ENCODE measurements at regions of chr7 and their contacts with region 1.

Region 1: GRCh38 chr7:120987683-120988590 is 574 bp upstream of the CPED1 start:
- DNase-seq: peak; percentile 91
- H3K4me3 ChIP-seq: peak overlapping the region; percentile 43
- CTCF ChIP-seq: peak; percentile 98

Region 2: GRCh38 chr7:120583899-120584586 is 403.9 kb before region 1 on chr7:
- in situ Hi-C with region 1: no loop called
- DNase-seq: peak; percentile 77
- H3K4me3 ChIP-seq: no peak overlapping the region
- CTCF ChIP-seq: no peak

Region 3: GRCh38 chr7:120894254-120894653 is 93.7 kb before region 1 on chr7:
- in situ Hi-C with region 1: no loop called
- DNase-seq: no peak
- H3K4me3 ChIP-seq: no peak overlapping the region
- CTCF ChIP-seq: no peak

Region 4: GRCh38 chr7:120933475-120933874 is 54.5 kb before region 1 on chr7:
- in situ Hi-C with region 1: no loop called
- DNase-seq: no peak
- H3K4me3 ChIP-seq: no peak overlapping the region
- CTCF ChIP-seq: no peak

Region 5: GRCh38 chr7:121027761-121028669 is 40.1 kb after region 1 on chr7:
- in situ Hi-C with region 1: loop called (anchors 5 kb)
- DNase-seq: no peak
- H3K4me3 ChIP-seq: no peak overlapping the region
- CTCF ChIP-seq: no peak

Region 6: DNA sequence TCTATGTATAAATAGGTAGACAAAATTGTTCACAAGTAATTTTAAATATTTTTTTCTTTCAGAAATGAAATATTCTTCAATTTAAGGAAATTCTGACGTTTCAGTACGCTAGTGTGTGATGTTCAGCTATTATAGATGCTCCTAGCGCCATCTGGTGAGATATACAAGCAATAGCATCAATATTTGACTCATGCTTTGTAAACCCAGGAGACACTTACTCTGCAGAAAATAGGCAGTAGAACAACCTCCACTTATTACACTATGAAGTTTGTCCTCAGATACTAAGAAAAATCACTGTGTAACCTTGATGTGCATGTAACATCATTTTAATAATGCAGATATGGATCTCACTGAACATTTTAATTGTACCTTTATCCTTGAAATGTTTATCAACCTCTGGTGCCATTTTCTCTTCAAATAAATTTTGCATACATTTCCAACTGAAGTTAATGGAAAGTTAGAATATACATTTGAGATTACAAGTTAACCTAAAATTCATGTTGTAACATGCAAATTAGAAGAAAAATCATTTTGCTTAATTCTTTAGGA is 559.7 kb after region 1 on chr7:
- in situ Hi-C with region 1: loop called (anchors 25 kb)
- DNase-seq: peak; percentile 60
- H3K4me3 ChIP-seq: no peak overlapping the region
- CTCF ChIP-seq: peak; percentile 55